Astrocyte of the cerebellum (primary cell): ENCODE measurements at regions of chr9 and their contacts with region 1.

Region 1: GRCh38 chr9:36956908-36957307 is 77.2 kb downstream of the PAX5 start:
- DNase-seq: no peak
- H3K4me3 ChIP-seq: no peak overlapping the region
- CTCF ChIP-seq: no peak

Region 2: GRCh38 chr9:36704148-36704547 is 252.8 kb before region 1 on chr9:
- in situ Hi-C with region 1: no loop called
- DNase-seq: no peak
- H3K4me3 ChIP-seq: no peak overlapping the region
- CTCF ChIP-seq: no peak

Region 3: DNA sequence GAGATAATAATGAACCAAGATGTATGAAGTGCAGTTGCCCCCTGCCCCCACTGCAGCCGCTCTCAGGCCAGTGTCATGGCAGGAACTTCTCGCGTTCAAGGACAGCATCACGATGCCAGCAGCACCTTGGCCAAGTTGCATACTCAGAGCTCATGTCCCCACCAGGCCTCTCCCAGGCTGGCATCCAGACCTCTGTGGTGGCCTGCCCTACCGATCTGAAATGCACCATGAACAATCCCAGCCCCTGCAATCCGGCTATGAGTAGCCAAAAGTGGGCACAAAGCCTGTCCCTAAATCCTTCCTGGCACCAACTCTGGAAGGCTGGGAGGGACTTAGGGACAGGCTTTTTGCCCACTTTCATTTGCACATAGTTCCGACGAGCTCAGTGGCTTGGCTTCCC is 63.7 kb before region 1 on chr9:
- in situ Hi-C with region 1: no loop called
- DNase-seq: no peak
- H3K4me3 ChIP-seq: no peak overlapping the region
- CTCF ChIP-seq: no peak

Region 4: DNA sequence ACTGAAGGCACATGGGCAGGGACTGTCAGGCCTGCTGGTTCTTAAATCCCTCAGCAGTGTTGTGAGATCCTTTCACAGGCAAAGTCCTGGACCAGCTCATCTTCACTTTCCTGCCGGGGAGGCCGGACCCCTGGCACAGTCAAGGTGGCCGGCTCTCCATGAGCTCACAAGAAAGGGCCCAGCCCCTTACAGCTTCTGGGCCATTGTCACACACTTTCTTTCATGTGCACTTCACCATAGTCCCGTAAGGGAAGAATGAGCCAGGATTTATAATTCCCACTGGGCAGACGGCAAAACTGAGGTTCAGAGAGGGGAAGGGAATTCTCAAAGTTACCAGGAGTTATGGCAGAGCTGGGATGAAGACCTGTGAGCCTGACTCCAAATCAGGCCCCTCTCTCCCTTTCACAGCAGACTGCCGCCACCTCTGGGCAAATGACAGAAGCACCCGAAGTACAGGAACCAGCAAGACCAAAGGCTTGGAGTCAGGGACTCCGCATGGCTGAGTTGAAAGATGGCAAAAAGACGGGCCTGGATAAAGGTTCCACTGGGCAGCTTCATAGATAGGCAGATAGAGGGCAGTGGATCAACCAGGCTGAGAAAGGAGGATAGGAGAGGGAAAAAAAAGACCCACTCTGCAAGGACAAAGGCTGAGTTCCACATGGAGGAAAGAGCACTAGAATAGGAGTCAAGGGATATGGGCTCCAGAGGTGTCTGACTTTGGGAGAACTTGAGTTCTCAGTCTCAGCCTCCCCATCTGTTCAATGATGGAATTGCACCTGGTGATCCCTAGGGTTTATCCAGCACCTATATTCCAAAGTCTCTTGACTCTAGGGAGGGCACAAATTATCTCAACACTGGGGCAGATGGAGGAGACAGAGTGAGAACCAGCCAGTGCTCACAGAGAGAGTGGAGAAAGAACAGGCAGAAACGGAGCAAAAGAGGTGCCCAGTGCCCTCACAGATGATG is 51.5 kb before region 1 on chr9:
- in situ Hi-C with region 1: loop called (anchors 5 kb)
- DNase-seq: no peak
- H3K4me3 ChIP-seq: no peak overlapping the region
- CTCF ChIP-seq: peak; percentile 7

Region 5: GRCh38 chr9:36924071-36924470 is 32.8 kb before region 1 on chr9:
- in situ Hi-C with region 1: no loop called
- DNase-seq: peak; percentile 72
- H3K4me3 ChIP-seq: no peak overlapping the region
- CTCF ChIP-seq: no peak

Region 6: DNA sequence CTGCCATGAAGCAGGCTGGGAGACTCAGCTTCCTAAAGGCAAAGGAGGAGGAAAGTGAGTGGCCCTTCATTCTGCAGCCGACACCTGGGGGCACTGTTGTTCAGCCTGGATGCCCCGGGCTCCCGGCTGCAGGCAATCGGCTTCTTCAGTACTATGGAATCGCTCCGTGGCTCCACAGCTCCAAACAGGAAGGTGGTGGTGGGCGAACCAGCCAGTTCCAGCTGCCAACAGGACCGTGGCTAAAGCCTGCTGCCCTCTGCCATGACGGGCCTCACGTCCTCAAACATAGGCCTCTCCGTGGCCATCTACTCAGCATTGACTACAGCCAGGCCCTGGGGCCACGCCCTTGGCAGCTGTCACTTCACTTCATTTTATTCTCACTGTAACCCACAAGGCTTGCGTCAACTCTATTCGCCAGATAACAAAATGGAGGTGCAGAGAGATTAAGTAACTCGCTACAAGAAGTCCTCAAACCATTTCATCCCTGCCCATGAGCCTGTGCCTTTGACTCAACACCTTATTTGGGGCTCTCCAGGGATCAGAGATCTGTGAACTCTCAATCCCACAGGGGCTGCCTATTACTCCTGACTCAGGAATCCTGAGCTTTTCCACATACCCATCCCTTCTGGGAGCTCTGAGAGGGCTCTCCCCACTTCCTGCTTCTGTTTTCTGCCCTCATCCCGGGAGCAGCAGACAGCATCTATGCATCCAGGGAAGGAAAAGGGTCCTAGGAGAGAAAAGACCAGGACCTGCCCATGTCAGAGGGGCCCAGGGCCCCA is 39.2 kb after region 1 on chr9:
- in situ Hi-C with region 1: no loop called
- DNase-seq: peak; percentile 19
- H3K4me3 ChIP-seq: no peak overlapping the region
- CTCF ChIP-seq: peak; percentile 65